ENCODE measurements at regions of chr4 and their contacts with region 1.

Region 1: DNA sequence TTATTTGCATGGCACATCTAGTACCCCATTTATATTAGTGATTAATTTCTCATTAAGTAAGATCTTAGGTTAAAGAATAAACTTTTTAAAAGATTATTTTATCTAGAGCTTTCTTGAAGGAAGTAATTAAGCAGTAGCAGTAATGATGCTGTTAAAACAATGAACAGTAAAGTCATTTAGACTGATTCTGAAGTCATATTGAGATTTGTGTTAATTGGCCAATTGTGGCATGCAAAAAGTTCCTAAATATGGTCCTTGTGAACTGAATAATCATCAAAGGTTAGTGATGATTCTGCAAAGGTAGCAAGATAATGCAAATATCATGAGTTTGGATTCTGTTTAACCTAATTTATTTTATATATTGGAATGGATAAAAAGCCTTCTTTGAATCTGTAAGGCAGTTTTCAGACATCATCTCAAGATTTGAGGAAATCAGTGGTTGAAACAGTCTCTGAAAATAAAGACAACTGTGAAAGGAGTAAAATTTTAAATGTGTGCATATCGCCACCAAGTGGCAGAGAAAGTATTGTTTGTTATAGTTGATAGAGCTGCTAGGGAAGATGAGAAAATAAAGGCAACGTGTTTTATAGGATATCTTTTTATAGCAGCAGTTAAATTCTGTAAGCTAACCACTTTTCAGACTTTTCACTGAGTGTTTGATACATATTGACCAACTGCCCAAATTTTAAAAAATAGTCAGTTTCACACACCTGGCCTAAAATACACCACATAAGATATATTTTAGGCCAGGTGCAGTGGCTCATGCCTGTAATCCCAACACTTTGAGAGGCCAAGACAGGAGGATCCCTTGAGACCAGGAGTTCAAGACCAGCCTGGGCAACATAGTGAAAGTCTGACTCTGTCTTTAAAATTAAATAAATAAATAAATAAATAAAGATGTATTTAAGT is 79.6 kb downstream of the CCKAR start:
- DNase-seq: peak; percentile 54
- H3K4me3 ChIP-seq: no peak overlapping the region
- H3K27ac ChIP-seq: no peak overlapping the region
- H3K4me1 ChIP-seq: no peaks in the 10 kb centered on the region
- H3K27me3 ChIP-seq: no peaks in the 10 kb centered on the region
- CTCF ChIP-seq: peak in 3 of 4 experiments; percentile 71 to 78 (median 77)
- POLR2A ChIP-seq: no peak

Region 2: DNA sequence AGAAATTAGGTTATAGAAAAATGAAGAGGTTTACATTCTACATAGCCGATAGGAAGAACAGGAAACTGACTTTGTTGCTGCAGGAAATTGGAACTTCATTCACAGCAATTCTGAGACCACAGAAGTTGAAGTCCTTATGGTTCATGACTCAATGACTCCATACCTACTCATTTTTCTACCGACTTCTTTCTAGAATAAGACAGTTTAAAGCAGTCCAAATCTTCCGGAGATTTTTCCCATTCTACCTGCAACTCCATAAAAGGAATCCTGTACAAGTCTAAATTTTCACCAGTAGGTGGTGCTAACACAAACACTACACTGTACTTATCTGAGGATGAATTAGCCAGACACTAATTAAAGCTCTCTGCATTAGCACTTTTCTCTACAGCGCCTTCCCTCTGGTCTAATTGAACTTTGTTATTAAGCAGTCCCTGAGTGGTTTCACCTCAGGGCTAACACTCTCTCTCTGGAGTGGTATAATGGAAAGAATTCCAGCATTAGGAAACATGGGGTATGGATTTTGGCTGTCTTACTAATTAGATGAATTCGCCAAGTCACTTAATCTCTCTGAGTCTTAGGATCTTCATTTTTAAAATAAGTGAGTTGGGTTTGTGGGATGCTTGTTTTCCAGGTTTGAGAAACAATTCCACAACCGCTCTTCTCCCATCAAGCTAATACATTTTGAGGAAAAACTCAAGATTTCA is 328.7 kb before region 1 on chr4:
- intact Hi-C with region 1: loop called (anchors 5 kb)
- DNase-seq: peak; percentile 58
- H3K4me3 ChIP-seq: no peak overlapping the region
- H3K27ac ChIP-seq: peak overlapping the region in 1 of 2 donors; percentile 50
- H3K4me1 ChIP-seq: peaks cover 17% of the 10 kb centered on the region
- H3K27me3 ChIP-seq: no peaks in the 10 kb centered on the region
- CTCF ChIP-seq: peak; percentile 42 to 80 (median 71)
- POLR2A ChIP-seq: no peak

Region 3: GRCh38 chr4:26330186-26330787 is 80.4 kb before region 1 on chr4:
- intact Hi-C with region 1: loop called (anchors 5 kb)
- DNase-seq: peak; percentile 44
- H3K4me3 ChIP-seq: no peak overlapping the region
- H3K27ac ChIP-seq: no peak overlapping the region
- H3K4me1 ChIP-seq: no peaks in the 10 kb centered on the region
- H3K27me3 ChIP-seq: no peaks in the 10 kb centered on the region
- CTCF ChIP-seq: peak in 3 of 4 experiments; percentile 72 to 76 (median 73)
- POLR2A ChIP-seq: no peak

Region 4: DNA sequence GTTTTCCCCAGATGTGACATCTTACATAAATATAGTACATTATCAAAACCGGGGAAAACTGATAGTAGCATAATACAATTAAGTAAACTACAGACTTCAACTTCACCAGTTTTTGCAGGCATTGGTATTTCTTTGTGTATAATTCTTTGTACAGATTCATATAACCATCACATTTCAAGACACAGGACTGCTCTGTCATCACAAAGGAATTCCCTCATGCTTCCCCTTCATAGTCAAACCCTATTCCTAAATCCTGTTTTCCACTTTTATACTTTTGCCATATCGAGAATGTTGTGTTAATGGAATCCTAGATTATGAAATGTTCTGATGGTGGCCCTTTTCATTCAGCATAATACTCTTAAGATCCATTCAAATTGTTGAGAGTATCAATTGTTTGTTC is 486.0 kb after region 1 on chr4:
- intact Hi-C with region 1: no loop called
- DNase-seq: no peak
- H3K4me3 ChIP-seq: no peak overlapping the region
- H3K27ac ChIP-seq: no peak overlapping the region
- H3K4me1 ChIP-seq: no peaks in the 10 kb centered on the region
- H3K27me3 ChIP-seq: no peaks in the 10 kb centered on the region
- CTCF ChIP-seq: no peak
- POLR2A ChIP-seq: no peak

Measured in prostate gland (tissue), 2 donors.